Psoas muscle (tissue), 8 donors: ENCODE measurements at regions of chr9 and their contacts with region 1.

Region 1: DNA sequence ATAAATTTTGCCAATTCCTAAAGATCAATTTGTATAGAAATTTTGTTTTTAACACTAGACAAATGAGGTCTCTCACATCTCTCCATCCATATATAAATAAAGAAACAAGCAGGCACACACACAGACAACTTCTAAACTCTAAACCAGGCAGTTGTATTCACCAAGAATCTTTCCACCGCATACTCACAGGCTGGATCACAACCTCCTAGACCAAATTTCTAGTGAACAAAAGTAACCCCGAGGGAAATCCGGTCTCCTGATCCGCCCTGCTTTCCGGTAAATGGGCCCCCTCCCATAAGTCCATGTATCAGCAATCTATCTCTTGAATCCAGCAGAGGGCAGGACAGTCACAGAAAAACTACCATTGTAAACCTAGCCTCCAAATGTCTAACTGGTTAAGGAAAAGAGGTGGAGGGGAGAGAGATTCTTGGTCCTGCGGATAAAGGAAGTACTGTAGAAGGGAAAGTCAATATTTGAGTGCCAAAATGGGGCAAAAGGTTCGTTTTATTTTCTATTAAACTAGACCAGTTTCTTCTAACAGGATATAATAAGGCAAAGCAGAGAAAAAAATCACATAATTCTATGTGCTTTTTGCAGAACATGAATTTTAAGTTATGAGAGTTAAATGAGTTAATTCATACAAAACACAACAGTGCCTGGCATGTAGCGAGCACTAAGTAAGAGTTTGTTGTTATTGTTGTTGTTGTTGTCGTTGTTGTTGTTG is 4.8 kb upstream of the SMU1 start:
- DNase-seq: peak in 1 of 2 donors; percentile 31
- ATAC-seq: peak; percentile 59 to 72 (median 66)
- H3K4me3 ChIP-seq: peak overlapping the region; percentile 33
- H3K27ac ChIP-seq: peak overlapping the region; percentile 64
- H3K4me1 ChIP-seq: peaks cover 8% of the 10 kb centered on the region
- H3K27me3 ChIP-seq: no peaks in the 10 kb centered on the region
- CTCF ChIP-seq: peak; percentile 82

Region 2: DNA sequence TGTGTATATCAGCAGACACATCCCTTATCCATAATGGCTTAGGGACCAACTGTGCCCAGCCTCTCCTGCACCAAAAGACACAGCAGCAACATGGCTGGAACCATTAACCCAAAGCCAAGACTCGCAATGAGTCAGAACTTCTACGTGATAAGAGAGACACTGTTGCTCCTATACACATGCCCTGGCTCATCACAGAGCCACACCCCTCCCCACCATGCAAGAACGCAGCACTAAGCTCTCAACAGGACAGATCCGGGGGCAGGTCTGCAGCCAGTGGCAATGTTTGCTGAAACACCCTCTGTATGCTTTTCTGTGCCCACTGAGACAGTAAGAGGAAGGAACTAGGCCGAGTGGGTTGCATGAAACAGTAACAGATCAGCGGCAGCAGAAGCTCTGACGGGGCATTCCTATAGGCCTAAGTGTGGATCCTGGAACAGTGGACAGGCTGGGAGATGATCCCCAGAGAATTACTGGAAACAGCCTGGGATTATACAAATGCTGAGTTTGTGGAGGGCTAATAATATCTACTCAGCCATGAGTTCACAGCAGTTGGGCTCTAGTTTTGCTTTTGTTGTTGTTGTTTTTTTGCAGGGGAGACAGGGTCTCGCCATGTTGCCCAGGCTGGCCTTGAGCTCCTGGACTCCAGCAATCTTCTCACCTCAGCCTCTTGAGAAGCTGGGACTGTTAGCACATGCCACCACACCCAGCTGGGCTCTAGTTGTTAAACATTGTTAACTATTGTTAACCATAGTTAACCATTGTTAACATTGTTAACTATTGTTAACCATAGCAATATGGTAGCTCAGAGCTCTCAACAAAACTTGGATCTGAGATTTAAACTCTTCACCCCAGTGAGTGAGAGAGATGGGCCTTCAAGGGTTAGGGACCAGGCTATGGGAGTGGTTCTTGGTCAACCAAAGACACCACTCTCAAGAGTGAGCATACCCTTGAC is 44.9 kb after region 1 on chr9:
- intact Hi-C with region 1: loop called in 1 of 2 experiments (anchors 5 kb)
- DNase-seq: no peak
- ATAC-seq: peak in 1 of 4 donors; percentile 41
- H3K4me3 ChIP-seq: no peak overlapping the region
- H3K27ac ChIP-seq: no peak overlapping the region
- H3K4me1 ChIP-seq: peaks cover 26% of the 10 kb centered on the region
- H3K27me3 ChIP-seq: no peaks in the 10 kb centered on the region
- CTCF ChIP-seq: no peak

Region 3: DNA sequence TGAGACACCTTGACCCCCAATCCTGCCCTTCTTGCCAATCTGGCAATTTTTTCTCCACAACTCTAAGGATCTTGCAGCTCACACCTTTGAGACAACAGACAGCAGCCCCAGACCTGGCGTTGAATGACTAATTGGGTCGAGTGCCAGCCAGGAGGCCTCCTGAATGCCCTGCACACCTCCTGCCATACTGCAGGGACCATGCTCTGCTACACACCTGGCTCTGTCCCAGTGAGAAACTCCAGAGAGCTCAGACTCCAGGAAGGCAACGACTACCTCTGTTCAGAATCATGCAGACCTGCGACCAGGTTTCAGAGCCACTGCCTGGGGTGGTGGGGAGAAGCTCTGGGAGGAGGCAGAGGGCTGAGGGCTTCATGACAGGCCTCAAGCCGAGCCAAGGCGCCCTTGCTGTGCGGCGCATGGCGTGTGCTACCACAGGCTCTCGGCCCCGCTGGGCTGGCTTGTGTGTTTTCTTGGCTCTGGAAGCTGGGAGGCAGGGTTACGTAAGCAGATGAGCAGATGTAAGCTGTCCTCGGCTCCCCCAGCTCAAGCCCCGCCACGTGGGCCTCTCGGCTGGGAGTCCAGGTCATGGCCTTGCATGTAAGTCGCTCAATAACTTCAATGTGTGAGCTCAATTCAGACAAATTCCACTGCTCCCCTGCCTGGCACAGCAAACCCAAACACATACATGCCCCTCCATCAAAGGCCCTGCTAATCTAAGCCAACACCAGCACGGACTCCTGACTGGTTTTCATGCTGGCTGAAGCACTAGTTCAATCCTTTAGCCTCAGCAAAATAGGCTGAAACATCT is 58.3 kb after region 1 on chr9:
- intact Hi-C with region 1: loop called in 1 of 2 experiments (anchors 2 kb)
- DNase-seq: peak; percentile 85 to 89
- ATAC-seq: peak; percentile 89 to 94 (median 92)
- H3K4me3 ChIP-seq: peak overlapping the region; percentile 45
- H3K27ac ChIP-seq: peak overlapping the region; percentile 72
- H3K4me1 ChIP-seq: peaks cover 75% of the 10 kb centered on the region
- H3K27me3 ChIP-seq: no peaks in the 10 kb centered on the region
- CTCF ChIP-seq: no peak

Region 4: DNA sequence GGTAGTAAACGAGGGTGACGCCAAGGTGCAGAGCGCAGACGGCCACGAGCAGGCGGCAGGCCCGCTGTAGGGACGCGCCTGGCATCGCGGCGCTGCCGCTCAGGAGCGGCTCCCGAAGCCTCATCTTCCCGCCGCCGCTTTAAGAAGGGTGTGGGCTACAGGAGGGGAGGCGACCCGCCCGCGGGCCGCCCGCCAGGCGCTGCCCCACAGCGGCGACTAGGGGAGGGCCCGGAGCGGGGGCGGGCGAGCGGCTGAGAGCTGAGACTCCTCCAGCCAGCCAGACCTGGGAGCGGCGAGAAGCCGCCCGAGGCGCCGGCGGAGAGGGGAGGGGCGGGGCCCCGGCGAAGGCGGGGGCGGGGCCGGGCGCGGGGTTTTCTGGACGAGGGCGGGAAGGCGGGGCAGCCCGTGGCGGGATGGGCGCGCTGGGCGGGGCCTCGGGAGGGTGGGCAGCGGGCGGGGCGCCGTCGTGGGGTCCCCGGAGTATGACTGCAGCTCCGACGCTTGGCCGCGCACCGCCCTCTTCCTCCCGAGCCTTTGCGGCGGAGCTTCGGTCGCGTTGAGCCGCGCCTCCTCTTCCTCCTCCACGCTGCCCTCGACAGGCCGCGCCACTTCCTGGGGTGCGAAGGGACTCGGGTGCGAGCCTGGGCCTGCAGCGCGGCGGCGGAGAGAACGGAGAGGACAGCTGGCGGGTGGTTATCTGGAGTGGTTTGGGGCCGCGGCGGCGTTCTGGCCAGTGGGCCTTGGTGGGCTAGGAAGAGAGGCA is 85.9 kb after region 1 on chr9 and contains the start of gene B4GALT1:
- intact Hi-C with region 1: loop called (anchors 1 to 5 kb)
- DNase-seq: peak; percentile 95 to 98
- ATAC-seq: peak; percentile 79 to 85 (median 81)
- H3K4me3 ChIP-seq: peak within 1 kb of the TSS; percentile 96
- H3K27ac ChIP-seq: peak within 1 kb of the TSS; percentile 95
- H3K4me1 ChIP-seq: peaks cover 37% of the 10 kb centered on the region
- H3K27me3 ChIP-seq: no peaks in the 10 kb centered on the region
- CTCF ChIP-seq: no peak
- total RNA-seq, gene B4GALT1: 22.3 to 28.1 (median 24.4) TPM

Region 5: DNA sequence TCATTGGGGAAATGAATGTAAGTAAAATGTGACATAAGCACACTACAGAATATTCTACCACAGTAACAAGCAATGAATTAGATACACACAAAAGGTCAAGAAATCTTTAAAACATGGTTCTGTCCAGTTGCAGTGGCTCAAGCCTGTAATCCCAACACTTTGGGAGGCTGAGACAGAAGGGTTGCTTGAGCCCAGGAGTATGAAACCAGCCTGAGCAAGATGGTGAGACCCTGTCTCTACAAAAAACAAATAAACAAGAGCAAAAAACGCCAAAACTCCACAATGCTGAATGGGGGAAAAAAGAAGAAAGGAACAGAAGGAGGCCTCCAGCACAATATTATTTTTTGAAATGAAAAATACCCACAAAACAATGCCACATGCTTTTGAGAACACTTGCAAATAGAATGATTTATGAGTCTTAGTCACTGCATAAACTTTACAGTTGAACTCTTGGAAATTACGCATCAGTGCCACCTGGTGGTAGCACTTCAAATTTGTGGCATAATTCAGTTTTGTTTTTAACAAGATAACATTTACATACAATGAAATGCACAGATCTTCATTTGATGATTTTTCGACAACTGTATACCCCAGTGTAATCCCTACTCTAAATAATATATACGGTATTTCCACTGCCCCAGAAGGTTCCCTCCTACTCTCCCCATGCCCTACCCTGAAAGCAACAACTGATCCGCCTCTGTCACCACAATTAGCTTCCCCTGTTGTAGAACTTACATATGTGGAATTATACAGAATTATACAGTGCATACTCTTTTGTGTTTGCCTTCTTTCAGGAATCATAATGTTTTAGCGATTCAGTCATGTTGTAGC is 144.2 kb after region 1 on chr9:
- intact Hi-C with region 1: loop called (anchors 1 to 2 kb)
- DNase-seq: no peak
- ATAC-seq: peak; percentile 50 to 87 (median 76)
- H3K4me3 ChIP-seq: no peak overlapping the region
- H3K27ac ChIP-seq: no peak overlapping the region
- H3K4me1 ChIP-seq: peaks cover 4% of the 10 kb centered on the region
- H3K27me3 ChIP-seq: peaks cover 0 to under 1% (median 0%) of the 10 kb centered on the region in 3 donors
- CTCF ChIP-seq: peak; percentile 88

Region 6: DNA sequence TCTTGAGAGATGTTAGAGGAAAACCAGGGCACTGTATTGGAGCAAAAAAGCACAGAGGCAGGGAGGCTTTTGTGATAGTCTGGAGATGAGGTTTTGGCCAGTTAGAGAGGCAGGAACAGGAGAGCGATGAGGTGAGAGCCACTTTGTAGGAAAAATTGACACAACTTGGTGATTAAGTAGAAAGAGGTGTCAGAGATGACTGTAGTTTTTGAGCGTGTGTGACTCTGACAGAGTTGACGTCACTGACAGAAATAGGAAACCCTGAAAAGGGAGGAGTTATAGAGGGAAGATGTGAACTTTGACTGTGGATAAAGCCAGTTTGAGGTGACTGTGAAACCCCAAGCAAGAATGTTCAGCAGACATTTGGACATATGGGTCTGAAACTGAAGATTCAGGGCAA is 224.7 kb after region 1 on chr9:
- intact Hi-C with region 1: no loop called
- DNase-seq: no peak
- ATAC-seq: peak; percentile 64 to 75 (median 74)
- H3K4me3 ChIP-seq: no peak overlapping the region
- H3K27ac ChIP-seq: peak overlapping the region; percentile 65
- H3K4me1 ChIP-seq: peaks cover 8% of the 10 kb centered on the region
- H3K27me3 ChIP-seq: no peaks in the 10 kb centered on the region
- CTCF ChIP-seq: no peak